T-cell (primary cell): ENCODE measurements at regions of chr6 and their contacts with region 1.

Region 1: DNA sequence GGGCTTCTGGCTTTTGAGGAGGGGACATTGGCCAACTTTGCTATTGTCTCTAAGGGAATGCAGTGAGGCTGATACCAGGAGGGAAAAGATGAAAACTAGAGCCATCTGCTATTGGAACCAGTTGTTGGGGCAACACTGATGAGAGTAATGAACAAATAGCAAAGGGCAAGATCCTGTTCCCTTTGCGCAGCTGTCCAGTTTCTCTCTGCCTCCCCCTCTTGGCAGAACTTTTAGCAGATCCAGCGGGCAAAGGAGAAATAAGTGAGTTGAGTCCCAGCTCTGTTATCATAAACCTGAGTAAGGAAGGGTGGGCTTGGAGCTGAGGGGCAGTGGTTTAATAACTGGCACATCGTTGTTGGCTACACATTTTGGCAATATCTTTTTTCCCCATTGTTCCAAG is 126.8 kb downstream of the AKAP7 start:
- DNase-seq: no peak
- ATAC-seq: no peak
- H3K4me3 ChIP-seq: no peak overlapping the region
- H3K4me3 Mint-ChIP-seq: no peak overlapping the region
- H3K27ac ChIP-seq: no peak overlapping the region
- H3K27ac Mint-ChIP-seq: no peak overlapping the region
- H3K4me1 ChIP-seq: peaks cover 0 to 2% of the 10 kb centered on the region in 2 experiments
- H3K4me1 Mint-ChIP-seq: peaks cover 31 to 36% (median 32%) of the 10 kb centered on the region in 3 donors
- H3K27me3 ChIP-seq: no peaks in the 10 kb centered on the region
- H3K27me3 Mint-ChIP-seq: no peaks in the 10 kb centered on the region

Region 2: DNA sequence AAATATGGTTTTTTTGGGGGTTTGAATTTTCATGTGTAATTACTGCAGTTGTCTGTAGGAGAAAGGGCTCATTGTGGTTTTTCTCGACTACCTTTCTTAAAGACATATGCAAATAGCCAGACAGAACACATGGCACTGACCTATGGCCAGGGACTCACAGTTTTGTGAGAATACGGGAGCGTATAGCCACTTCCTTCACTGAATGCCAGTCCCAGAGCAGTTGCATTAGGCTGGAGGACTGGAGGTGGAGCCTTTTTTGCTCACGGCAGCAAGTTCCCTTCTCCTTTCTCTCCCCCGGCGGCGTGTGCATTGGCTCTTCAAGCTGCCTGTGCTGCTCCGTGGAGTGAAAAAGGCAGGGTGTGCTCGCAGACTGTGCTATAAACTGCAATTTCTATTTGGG is 11.9 kb before region 1 on chr6:
- CTCF ChIA-PET with region 1: interaction called in 1 of 2 experiments, 3 read pairs
- POLR2A ChIA-PET with region 1: interaction called in 1 of 2 experiments, 10 read pairs
- DNase-seq: peak in 29 of 35 experiments; percentile 3 to 39 (median 15)
- ATAC-seq: peak; percentile 61 to 83 (median 78)
- H3K4me3 ChIP-seq: peak overlapping the region; percentile 7 to 71
- H3K4me3 Mint-ChIP-seq: peak overlapping the region; percentile 47 to 73 (median 64)
- H3K27ac ChIP-seq: no peak overlapping the region
- H3K27ac Mint-ChIP-seq: peak overlapping the region; percentile 2 to 4
- H3K4me1 ChIP-seq: peaks cover 5 to 29% of the 10 kb centered on the region in 2 experiments
- H3K4me1 Mint-ChIP-seq: peaks cover 39 to 59% (median 56%) of the 10 kb centered on the region in 3 donors
- H3K27me3 ChIP-seq: no peaks in the 10 kb centered on the region
- H3K27me3 Mint-ChIP-seq: no peaks in the 10 kb centered on the region